ENCODE measurements at regions of chr17 and their contacts with region 1.

Region 1: DNA sequence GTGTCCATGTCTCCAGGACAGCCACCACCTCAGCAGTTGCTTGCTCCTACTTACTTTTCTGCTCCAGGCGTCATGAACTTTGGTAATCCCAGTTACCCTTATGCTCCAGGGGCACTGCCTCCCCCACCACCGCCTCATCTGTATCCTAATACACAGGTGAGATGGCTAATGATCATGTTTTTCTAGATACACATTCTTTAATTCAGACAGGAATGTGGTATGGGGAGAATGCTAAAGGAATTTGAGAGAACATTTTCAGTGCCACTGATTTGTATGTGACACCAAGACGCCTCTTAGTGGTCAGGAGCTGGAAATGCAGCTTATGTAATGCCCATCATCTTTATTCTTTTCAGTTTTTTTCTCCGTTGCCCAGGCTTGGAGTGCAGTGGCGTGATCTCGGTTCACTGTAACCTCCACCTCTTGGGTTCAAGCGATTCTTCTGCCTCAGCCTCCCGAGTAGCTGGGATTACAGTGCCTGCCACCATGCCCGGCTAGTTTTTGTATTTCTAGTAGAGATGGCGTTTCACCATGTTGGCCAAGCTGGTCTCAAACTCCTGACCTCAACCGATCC is 8.9 kb upstream of the RAPGEFL1 start:
- DNase-seq: peak; percentile 65
- H3K4me3 ChIP-seq: peak overlapping the region in 1 of 2 experiments; percentile 36; a peak in 1 of 4 replicates
- H3K27ac ChIP-seq: peak overlapping the region; percentile 37; a peak in 2 of 4 replicates
- H3K4me1 ChIP-seq: peaks cover 0 to 3% of the 10 kb centered on the region in 2 experiments; a peak in 2 of 4 replicates
- H3K27me3 ChIP-seq: no peaks in the 10 kb centered on the region
- CTCF ChIP-seq: peak; percentile 83
- EP300 ChIP-seq: no peak
- RAD21 ChIP-seq: peak; percentile 75

Region 2: DNA sequence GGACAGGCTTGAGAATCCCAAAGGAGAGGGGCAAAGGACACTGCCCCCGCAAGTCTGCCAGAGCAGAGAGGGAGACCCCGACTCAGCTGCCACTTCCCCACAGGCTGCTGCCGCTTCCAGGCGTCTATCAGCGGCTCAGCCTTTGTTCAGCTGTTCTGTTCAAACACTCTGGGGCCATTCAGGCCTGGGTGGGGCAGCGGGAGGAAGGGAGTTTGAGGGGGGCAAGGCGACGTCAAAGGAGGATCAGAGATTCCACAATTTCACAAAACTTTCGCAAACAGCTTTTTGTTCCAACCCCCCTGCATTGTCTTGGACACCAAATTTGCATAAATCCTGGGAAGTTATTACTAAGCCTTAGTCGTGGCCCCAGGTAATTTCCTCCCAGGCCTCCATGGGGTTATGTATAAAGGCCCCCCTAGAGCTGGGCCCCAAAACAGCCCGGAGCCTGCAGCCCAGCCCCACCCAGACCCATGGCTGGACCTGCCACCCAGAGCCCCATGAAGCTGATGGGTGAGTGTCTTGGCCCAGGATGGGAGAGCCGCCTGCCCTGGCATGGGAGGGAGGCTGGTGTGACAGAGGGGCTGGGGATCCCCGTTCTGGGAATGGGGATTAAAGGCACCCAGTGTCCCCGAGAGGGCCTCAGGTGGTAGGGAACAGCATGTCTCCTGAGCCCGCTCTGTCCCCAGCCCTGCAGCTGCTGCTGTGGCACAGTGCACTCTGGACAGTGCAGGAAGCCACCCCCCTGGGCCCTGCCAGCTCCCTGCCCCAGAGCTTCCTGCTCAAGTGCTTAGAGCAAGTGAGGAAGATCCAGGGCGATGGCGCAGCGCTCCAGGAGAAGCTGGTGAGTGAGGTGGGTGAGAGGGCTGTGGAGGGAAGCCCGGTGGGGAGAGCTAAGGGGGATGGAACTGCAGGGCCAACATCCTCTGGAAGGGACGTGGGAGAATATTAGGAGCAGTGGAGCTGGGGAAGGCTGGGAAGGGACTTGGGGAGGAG is 153.0 kb before region 1 on chr17 and contains the start of gene CSF3:
- CTCF ChIA-PET with region 1: interaction called, 16 read pairs
- POLR2A ChIA-PET with region 1: no interaction called
- DNase-seq: peak; percentile 19
- H3K4me3 ChIP-seq: no peak within 1 kb of the TSS
- H3K27ac ChIP-seq: no peak within 1 kb of the TSS
- H3K4me1 ChIP-seq: no peaks in the 10 kb centered on the region; a peak in 1 of 4 replicates
- H3K27me3 ChIP-seq: no peaks in the 10 kb centered on the region
- CTCF ChIP-seq: no peak
- EP300 ChIP-seq: no peak
- RAD21 ChIP-seq: no peak
- polyA plus RNA-seq, gene CSF3: not detected in 2 replicates

Region 3: GRCh38 chr17:40121181-40122135 is 46.9 kb before region 1 on chr17 and contains the start of gene MSL1:
- CTCF ChIA-PET with region 1: interaction called, 12 read pairs
- POLR2A ChIA-PET with region 1: no interaction called
- DNase-seq: peak; percentile 98
- H3K4me3 ChIP-seq: peak within 1 kb of the TSS; percentile 81 to 99
- H3K27ac ChIP-seq: peak within 1 kb of the TSS; percentile 89 to 92
- H3K4me1 ChIP-seq: peaks cover 6 to 7% of the 10 kb centered on the region in 2 experiments; a peak in 2 of 4 replicates
- H3K27me3 ChIP-seq: no peaks in the 10 kb centered on the region
- CTCF ChIP-seq: no peak
- EP300 ChIP-seq: no peak
- RAD21 ChIP-seq: no peak
- polyA plus RNA-seq, gene MSL1: 30.2 and 39.8 TPM in 2 replicates

Region 4: DNA sequence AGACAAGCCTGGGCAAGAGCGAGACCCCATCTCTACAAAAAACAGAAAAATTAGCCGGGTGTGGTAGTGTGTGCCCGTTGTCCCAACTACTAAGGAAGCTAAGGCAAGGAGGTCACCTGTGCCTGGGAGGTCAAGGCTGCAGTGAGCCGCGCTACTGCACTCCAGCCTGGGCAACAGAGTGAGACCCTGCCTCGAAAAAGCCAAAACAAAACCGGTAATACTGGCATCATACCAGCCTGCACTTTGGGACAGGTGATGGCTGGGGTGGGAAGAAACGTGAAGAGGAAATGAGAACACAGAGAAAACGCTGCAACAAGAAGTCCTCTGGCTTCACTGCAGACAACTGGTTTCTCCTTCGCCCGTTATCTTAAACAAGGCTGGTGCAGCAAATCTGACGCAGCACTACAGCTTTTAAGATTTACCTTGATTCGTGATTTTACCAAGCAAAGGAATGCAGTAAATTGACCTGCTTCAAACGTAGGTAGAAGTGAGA is 28.7 kb before region 1 on chr17:
- CTCF ChIA-PET with region 1: interaction called, 13 read pairs
- POLR2A ChIA-PET with region 1: no interaction called
- DNase-seq: no peak
- H3K4me3 ChIP-seq: peak overlapping the region; percentile 59 to 65
- H3K27ac ChIP-seq: peak overlapping the region; percentile 85 to 90
- H3K4me1 ChIP-seq: peaks cover 4% of the 10 kb centered on the region in 2 experiments; a peak in 2 of 4 replicates
- H3K27me3 ChIP-seq: no peaks in the 10 kb centered on the region
- CTCF ChIP-seq: no peak
- EP300 ChIP-seq: no peak
- RAD21 ChIP-seq: no peak

Region 5: GRCh38 chr17:40157973-40158372 is 10.4 kb before region 1 on chr17:
- CTCF ChIA-PET with region 1: interaction called, 47 read pairs
- POLR2A ChIA-PET with region 1: no interaction called
- DNase-seq: no peak
- H3K4me3 ChIP-seq: no peak overlapping the region
- H3K27ac ChIP-seq: no peak overlapping the region
- H3K4me1 ChIP-seq: no peaks in the 10 kb centered on the region
- H3K27me3 ChIP-seq: no peaks in the 10 kb centered on the region
- CTCF ChIP-seq: no peak
- EP300 ChIP-seq: no peak
- RAD21 ChIP-seq: no peak

Region 6: GRCh38 chr17:40209404-40210093 is 41.2 kb after region 1 on chr17:
- CTCF ChIA-PET with region 1: no interaction called
- POLR2A ChIA-PET with region 1: no interaction called
- DNase-seq: no peak
- H3K4me3 ChIP-seq: no peak overlapping the region
- H3K27ac ChIP-seq: no peak overlapping the region; a peak in 1 of 4 replicates
- H3K4me1 ChIP-seq: peaks cover 0 to 8% of the 10 kb centered on the region in 2 experiments; a peak in 1 of 4 replicates
- H3K27me3 ChIP-seq: no peaks in the 10 kb centered on the region
- CTCF ChIP-seq: no peak
- EP300 ChIP-seq: no peak
- RAD21 ChIP-seq: no peak

Region 7: GRCh38 chr17:40264458-40265185 is 96.3 kb after region 1 on chr17:
- CTCF ChIA-PET with region 1: no interaction called
- POLR2A ChIA-PET with region 1: no interaction called
- DNase-seq: no peak
- H3K4me3 ChIP-seq: no peak overlapping the region
- H3K27ac ChIP-seq: no peak overlapping the region
- H3K4me1 ChIP-seq: no peaks in the 10 kb centered on the region
- H3K27me3 ChIP-seq: no peaks in the 10 kb centered on the region
- CTCF ChIP-seq: no peak
- EP300 ChIP-seq: no peak
- RAD21 ChIP-seq: no peak